ENCODE measurements at regions of chr12 and their contacts with region 1.

Region 1: DNA sequence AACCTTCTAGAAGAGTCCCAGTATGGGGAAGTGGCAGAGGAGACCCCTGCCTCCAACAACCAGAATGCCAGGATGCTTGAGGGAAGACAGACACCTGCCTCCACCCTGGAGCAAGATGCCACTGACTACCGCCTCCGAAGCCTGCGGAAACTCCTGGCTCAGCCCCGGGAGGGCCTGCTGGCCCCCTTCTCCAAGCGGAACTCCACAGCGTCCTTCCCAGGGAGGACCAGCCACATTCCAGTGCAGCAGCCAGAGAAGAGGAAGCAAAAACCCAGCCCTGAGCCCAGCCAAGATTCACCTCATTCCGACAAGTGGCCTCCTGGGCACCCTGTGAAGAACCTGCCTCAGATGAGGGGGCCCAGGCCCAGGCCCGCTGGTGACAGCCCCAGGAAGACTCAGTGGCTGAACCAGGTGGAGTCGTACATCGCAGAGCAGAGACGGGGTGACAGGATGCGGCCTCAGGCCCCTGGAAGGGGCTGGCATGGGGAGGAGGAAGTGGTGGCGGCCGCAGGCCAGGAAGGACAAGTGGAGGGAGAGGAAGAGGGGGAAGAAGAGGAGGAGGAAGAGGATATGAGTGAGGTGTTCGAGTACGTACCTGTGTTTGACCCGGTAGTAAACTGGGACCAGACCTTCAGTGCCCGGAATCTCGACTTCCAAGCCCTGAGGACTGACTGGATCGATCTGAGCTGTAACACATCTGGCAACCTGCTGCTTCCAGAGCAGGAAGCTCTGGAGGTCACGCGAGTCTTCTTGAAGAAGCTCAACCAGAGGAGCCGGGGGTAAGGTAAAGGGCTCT is 93.7 kb downstream of the B4GALNT3 start:
- DNase-seq: no peak
- H3K4me3 ChIP-seq: no peak overlapping the region
- H3K27ac ChIP-seq: no peak overlapping the region
- H3K4me1 ChIP-seq: peaks cover 0 to 4% (median 0%) of the 10 kb centered on the region in 4 donors
- H3K27me3 ChIP-seq: no peaks in the 10 kb centered on the region
- CTCF ChIP-seq: no peak
- EP300 ChIP-seq: no peak
- POLR2A ChIP-seq: no peak

Region 2: GRCh38 chr12:452667-453210 is 100.7 kb before region 1 on chr12:
- in situ Hi-C with region 1: loop called in 3 of 4 experiments (anchors 5 to 10 kb)
- intact Hi-C with region 1: no loop called
- DNase-seq: peak; percentile 56
- H3K4me3 ChIP-seq: no peak overlapping the region
- H3K27ac ChIP-seq: no peak overlapping the region
- H3K4me1 ChIP-seq: peaks cover 0 to 17% (median 9%) of the 10 kb centered on the region in 4 donors
- H3K27me3 ChIP-seq: peaks cover 17% of the 10 kb centered on the region
- CTCF ChIP-seq: peak in 2 of 5 experiments; percentile 49 to 59
- EP300 ChIP-seq: no peak
- POLR2A ChIP-seq: no peak

Measured in transverse colon (tissue), 4 donors.